Transverse colon (tissue), 4 donors: ENCODE measurements at regions of chr5 and their contacts with region 1.

Region 1: GRCh38 chr5:34522599-34523386 is 133.3 kb upstream of the RAI14 start:
- DNase-seq: peak; percentile 69
- H3K4me3 ChIP-seq: no peak overlapping the region
- H3K27ac ChIP-seq: peak overlapping the region in 1 of 4 donors; percentile 36
- H3K4me1 ChIP-seq: peaks cover 0 to 4% (median 0%) of the 10 kb centered on the region in 4 donors
- H3K27me3 ChIP-seq: no peaks in the 10 kb centered on the region
- CTCF ChIP-seq: peak; percentile 64 to 85 (median 65)
- EP300 ChIP-seq: no peak
- POLR2A ChIP-seq: no peak

Region 2: GRCh38 chr5:34656001-34656699 is 133.4 kb after region 1 on chr5 and contains the start of gene RAI14:
- in situ Hi-C with region 1: no loop called
- intact Hi-C with region 1: loop called (anchors 10 kb)
- DNase-seq: peak; percentile 73
- H3K4me3 ChIP-seq: peak within 1 kb of the TSS; percentile 72 to 91 (median 87)
- H3K27ac ChIP-seq: peak within 1 kb of the TSS; percentile 89 to 94 (median 92)
- H3K4me1 ChIP-seq: peaks cover 5 to 22% (median 14%) of the 10 kb centered on the region in 4 donors
- H3K27me3 ChIP-seq: no peaks in the 10 kb centered on the region
- CTCF ChIP-seq: no peak
- EP300 ChIP-seq: no peak
- POLR2A ChIP-seq: peak; percentile 8
- total RNA-seq, gene RAI14: 13.9 to 18.3 (median 15.3) TPM

Region 3: DNA sequence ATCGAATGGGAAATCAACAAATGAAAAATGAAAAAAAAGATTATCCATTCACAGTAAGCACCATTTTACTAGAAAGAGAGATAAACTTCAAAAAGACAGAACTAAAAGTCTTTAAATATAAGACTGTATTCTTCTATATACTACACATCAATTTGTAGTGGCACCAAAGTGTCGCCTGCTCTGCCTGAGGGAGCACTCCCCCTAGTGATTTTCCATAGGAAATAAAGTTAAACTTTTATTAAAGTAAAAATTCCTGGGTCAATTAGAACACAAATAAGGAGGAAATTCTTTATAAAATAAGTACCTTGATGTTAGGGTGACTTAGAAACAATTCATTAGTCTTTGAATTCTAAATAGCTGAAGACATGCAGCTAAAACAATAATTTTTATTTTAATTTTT is 382.8 kb after region 1 on chr5:
- in situ Hi-C with region 1: loop called in 1 of 4 experiments (anchors 10 kb)
- intact Hi-C with region 1: no loop called
- DNase-seq: no peak
- H3K4me3 ChIP-seq: no peak overlapping the region
- H3K27ac ChIP-seq: no peak overlapping the region
- H3K4me1 ChIP-seq: no peaks in the 10 kb centered on the region
- H3K27me3 ChIP-seq: no peaks in the 10 kb centered on the region
- CTCF ChIP-seq: no peak
- EP300 ChIP-seq: no peak
- POLR2A ChIP-seq: no peak